GM13977 (cell line): ENCODE measurements at regions of chr2 and their contacts with region 1.

Region 1: GRCh38 chr2:86360776-86361175 is 23.4 kb upstream of the REEP1 start:
- DNase-seq: no peak
- CTCF ChIP-seq: no peak

Region 2: DNA sequence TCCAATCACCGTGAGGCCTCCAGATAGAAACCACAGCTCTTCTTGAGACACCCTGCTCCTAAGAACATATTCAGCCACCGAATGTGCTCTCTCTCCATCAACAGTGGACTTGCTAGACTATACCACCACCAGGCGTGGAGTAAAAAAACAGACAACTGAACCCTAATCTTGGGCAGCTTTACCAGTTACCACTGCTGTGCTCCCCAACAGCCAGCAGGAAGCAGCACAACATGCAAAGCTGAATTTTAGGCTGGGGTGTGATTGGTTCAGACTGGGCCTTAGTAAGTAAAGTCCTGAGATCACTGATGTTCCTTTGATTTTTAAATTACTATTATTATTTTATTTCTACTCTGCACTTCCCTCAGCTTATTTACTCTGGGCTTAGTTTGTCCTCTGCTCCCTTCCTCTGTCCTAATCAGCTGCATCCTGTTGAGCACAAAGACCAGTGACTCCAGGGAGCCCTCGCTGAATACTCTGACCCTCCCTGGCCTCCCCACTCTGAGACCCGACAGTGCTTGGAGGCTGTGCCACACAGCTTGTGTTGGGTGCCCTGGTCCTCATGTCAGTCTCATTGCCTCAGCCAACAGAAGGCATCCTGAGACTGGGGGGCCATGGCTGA is 139.6 kb before region 1 on chr2:
- in situ Hi-C with region 1: loop called (anchors 5 kb)
- DNase-seq: peak; percentile 66
- CTCF ChIP-seq: peak; percentile 83

Region 3: GRCh38 chr2:86498468-86499250 is 137.9 kb after region 1 on chr2:
- in situ Hi-C with region 1: no loop called
- DNase-seq: no peak
- CTCF ChIP-seq: no peak